ENCODE measurements at regions of chr14 and their contacts with region 1.

Region 1: DNA sequence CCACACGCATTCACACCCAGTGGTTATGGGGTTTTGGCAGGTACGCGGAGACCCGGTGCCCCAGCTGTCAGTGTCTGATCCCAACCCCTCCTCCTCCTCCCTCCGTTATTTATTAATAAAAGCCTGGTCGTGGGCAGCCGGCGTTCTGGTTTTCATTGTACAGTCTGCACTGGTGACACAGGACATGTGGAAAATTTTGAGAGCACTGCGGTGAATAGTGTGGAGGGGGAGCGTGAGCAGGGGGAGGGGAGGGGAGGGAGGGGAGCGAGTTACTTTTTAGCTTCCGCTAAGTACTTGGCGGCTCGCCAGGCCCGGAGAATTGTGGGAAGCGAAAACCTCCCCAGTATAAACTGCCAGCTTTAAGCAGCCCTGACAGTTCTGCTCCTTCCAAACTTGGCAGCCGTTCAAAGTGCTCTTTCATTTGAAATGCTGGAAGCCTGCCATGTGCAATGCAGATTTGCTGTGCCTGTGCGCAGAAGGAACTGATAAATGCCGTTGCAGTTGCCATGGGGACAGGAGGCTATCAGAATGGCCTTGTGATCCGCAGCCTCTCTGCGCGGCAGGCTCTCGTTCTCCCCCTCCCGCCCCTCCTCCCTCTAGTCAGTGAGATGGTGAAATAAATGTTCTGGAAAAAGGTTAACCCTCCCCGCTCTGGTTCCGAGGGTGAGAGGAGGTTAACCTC is 11.7 kb upstream of the IRF2BPL start:
- DNase-seq: peak; percentile 96
- H3K4me3 Mint-ChIP-seq: peak overlapping the region; percentile 71
- H3K27ac Mint-ChIP-seq: peak overlapping the region; percentile 97
- H3K4me1 Mint-ChIP-seq: peaks cover 92% of the 10 kb centered on the region
- H3K27me3 Mint-ChIP-seq: no peaks in the 10 kb centered on the region

Region 2: DNA sequence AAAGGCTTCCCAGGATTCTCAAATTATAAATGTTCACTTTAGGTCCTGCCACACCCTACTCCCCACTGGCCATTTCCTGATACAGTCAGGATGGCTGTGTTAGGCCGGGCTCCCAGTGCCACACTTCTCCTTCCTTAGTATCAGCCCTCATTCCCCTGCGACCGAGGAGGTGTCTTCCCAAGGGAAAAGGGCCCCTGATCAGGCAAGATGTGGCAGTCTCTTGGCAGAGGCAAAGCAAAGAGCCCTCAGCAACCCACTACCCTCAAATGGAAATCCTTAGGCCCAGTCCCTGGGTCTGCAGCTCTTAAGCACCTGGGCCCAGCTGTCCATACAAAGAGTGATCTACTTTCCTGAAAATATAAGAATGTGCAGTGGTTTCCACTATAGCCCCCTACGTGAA is 375.4 kb before region 1 on chr14:
- CTCF ChIA-PET with region 1: no interaction called
- POLR2A ChIA-PET with region 1: no interaction called
- DNase-seq: no peak
- H3K4me3 Mint-ChIP-seq: no peak overlapping the region
- H3K27ac Mint-ChIP-seq: no peak overlapping the region
- H3K4me1 Mint-ChIP-seq: no peaks in the 10 kb centered on the region
- H3K27me3 Mint-ChIP-seq: peaks cover 4% of the 10 kb centered on the region

Region 3: DNA sequence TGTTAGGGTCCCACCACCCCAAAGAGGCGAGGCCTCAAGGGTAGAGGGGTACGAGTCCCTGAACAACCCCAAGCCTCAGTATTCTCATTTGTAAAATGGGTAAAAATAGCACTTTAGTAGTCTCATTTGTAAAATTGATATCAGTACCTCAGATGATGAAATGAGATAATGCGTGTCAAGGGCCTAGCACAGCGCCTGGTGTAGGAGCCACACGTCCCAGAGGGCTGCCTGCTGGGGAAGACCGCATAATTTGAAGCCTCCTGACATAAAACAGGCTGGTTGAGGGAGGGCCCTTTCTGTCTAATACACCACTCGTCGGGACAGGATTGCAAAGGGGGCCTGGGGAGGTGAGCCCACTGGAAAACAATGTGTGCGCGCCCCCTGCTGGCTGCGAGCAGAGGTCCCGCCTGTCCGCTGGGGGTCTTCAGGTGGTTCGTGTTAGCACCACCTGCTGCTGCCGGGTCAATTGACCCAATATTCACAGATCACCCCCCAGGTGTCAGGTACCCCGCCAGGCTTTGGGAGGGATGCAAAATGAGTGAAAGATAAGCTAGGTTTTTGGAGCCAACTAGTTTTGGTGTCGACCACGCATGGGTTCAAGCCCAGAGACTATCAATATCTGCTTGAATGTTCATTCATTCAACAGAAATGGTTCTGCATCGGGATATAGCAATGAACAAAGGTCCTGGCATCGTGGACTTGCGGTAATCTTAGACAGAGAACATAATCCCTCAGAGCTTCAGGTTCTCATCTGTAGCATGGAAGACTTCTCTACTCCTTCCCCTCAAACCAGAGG is 13.0 kb after region 1 on chr14:
- CTCF ChIA-PET with region 1: interaction called, 40 read pairs
- POLR2A ChIA-PET with region 1: no interaction called
- DNase-seq: peak; percentile 79
- H3K4me3 Mint-ChIP-seq: no peak overlapping the region
- H3K27ac Mint-ChIP-seq: peak overlapping the region; percentile 31
- H3K4me1 Mint-ChIP-seq: peaks cover 26% of the 10 kb centered on the region
- H3K27me3 Mint-ChIP-seq: no peaks in the 10 kb centered on the region

Measured in activated CD4-positive, alpha-beta T cell treated with anti-CD3 and anti-CD28 coated beads, Interleukin-2, amount 10 ng/mL, durations not matched to agents 7 days and 5 days (primary cell).